Calu3 (cell line): ENCODE measurements at regions of chr2 and their contacts with region 1.

Region 1: DNA sequence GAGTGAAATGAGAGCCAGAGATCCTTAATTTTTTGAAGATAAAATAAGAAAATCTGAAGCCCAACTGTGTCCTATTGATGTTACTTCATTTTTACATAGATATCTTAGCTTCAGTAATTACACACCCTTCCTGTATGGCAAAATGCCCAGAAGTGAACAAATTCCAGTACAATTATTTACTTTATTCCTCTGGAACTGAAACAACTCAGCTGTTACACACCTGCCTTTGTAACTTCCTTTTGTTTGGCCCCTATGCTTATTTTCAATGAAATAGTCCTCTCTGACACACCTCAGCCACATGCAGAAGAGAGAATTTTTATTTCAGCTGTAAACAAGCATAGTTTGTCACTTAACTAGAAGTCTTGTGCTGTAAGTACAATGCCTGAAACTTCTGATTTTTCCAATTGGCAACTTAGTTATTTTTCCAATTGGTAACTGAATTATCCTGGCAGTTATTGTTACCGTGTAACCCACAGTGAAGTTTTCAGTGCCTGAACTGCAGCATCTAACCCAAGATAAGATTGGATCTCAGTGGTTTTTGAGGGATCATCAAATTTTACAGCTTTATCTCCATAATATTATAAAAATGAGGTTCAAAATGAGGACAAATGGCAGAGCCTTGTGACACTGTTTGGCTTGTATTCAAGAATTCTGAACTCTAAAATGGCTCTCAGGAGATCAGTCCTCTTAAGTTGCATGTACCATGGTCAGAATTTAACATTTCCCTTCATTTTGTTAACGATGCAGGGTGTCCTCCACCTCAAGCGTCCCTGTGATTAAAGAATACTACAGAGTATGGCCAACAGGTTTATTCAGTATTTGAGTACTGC is 82.6 kb downstream of the PKP4 start:
- DNase-seq: peak; percentile 60
- H3K4me3 Mint-ChIP-seq: no peak overlapping the region
- H3K27ac Mint-ChIP-seq: peak overlapping the region; percentile 65
- H3K4me1 Mint-ChIP-seq: peaks cover 15% of the 10 kb centered on the region
- H3K27me3 Mint-ChIP-seq: no peaks in the 10 kb centered on the region
- CTCF ChIP-seq: no peak

Region 2: GRCh38 chr2:158507166-158507565 is 32.2 kb before region 1 on chr2:
- CTCF ChIA-PET with region 1: no interaction called
- intact Hi-C with region 1: loop called (anchors 5 kb)
- DNase-seq: no peak
- H3K4me3 Mint-ChIP-seq: no peak overlapping the region
- H3K27ac Mint-ChIP-seq: peak overlapping the region; percentile 41
- H3K4me1 Mint-ChIP-seq: peaks cover 60% of the 10 kb centered on the region
- H3K27me3 Mint-ChIP-seq: no peaks in the 10 kb centered on the region
- CTCF ChIP-seq: no peak